CD4-positive, alpha-beta T cell (primary cell): ENCODE measurements at regions of chr6 and their contacts with region 1.

Region 1: DNA sequence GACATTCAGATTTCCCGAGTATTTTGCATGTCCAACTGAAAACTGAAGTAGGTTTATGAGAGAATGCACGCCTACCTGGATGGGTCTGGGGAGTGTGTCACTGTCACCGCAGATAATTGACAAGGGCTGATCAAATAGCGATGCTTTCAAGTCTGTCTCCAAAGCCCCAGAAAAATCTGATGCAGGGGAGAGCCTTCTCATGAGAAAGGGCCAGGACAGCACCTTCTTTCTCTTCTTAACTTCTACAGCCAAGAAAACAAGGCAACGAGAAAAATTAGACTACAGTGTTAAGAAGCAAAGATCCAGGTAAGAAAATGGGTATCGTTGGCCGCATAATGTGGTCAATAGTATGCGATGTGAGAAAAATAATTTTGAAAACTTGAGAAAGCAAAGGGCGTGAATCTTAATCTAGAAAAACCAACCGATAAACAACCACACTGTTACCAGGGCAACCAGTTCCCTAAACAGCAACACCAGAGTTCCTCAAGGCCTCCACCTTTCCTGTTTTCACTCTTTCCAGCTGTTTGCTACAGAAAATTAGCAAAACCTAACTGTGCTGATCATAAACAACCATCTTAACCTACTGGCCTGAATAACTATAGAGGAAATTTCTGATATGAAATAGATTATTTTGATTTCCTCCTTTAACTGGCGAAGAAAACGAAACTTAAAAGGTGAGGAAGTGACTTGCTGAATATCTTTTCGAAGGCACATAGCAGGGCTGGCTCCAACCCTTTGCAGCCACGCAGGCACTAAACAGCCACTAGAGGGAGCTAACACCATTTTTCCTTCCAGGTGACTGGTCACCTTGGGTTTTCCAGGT is 2.6 kb downstream of the TAGAP start:
- DNase-seq: peak; percentile 57 to 94 (median 68)
- ATAC-seq: peak; percentile 54
- H3K4me3 ChIP-seq: peak overlapping the region; percentile 88
- H3K4me3 Mint-ChIP-seq: peak overlapping the region; percentile 97
- H3K27ac ChIP-seq: peak overlapping the region; percentile 81 to 91
- H3K27ac Mint-ChIP-seq: peak overlapping the region; percentile 91
- H3K4me1 ChIP-seq: peaks cover 61% of the 10 kb centered on the region
- H3K4me1 Mint-ChIP-seq: peaks cover 76% of the 10 kb centered on the region
- H3K27me3 ChIP-seq: no peaks in the 10 kb centered on the region
- H3K27me3 Mint-ChIP-seq: no peaks in the 10 kb centered on the region
- CTCF ChIP-seq: peak; percentile 99

Region 2: GRCh38 chr6:159008656-159009288 is 33.4 kb before region 1 on chr6:
- CTCF ChIA-PET with region 1: interaction called, 14 read pairs
- POLR2A ChIA-PET with region 1: interaction called, 35 read pairs
- intact Hi-C with region 1: loop called (anchors 2 to 5 kb)
- DNase-seq: peak in 4 of 14 experiments; percentile 22 to 79 (median 77)
- ATAC-seq: peak; percentile 83
- H3K4me3 ChIP-seq: peak overlapping the region; percentile 23
- H3K4me3 Mint-ChIP-seq: peak overlapping the region; percentile 39
- H3K27ac ChIP-seq: no peak overlapping the region
- H3K27ac Mint-ChIP-seq: no peak overlapping the region
- H3K4me1 ChIP-seq: peaks cover 29% of the 10 kb centered on the region
- H3K4me1 Mint-ChIP-seq: peaks cover 47% of the 10 kb centered on the region
- H3K27me3 ChIP-seq: no peaks in the 10 kb centered on the region
- H3K27me3 Mint-ChIP-seq: no peaks in the 10 kb centered on the region
- CTCF ChIP-seq: peak; percentile 85

Region 3: DNA sequence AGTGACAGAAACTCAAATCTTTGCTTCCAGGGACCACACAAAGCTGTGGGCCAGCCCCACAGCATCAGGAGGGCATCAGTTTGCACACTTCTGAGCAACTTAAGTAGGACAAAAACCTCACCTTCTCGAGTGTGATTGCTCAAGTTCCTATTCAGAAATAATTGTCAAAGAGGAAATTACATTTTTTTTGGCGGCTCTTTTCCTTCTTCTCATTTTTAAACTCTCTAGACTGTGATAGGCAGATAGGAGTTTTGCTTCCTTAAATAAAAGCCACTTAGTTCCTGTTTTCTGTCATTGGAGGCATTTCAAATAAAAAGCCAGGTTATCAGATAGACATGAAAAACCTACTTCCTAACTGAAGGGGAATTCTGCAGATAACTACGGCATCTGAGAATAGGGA is 13.8 kb after region 1 on chr6:
- CTCF ChIA-PET with region 1: interaction called, 7 read pairs
- POLR2A ChIA-PET with region 1: interaction called, 146 read pairs
- intact Hi-C with region 1: loop called in 1 of 2 experiments (anchors 2 kb)
- DNase-seq: peak in 2 of 14 experiments; percentile 39 to 58
- ATAC-seq: no peak
- H3K4me3 ChIP-seq: no peak overlapping the region
- H3K4me3 Mint-ChIP-seq: peak overlapping the region; percentile 11
- H3K27ac ChIP-seq: no peak overlapping the region
- H3K27ac Mint-ChIP-seq: peak overlapping the region; percentile 68
- H3K4me1 ChIP-seq: peaks cover 45% of the 10 kb centered on the region
- H3K4me1 Mint-ChIP-seq: peaks cover 63% of the 10 kb centered on the region
- H3K27me3 ChIP-seq: no peaks in the 10 kb centered on the region
- H3K27me3 Mint-ChIP-seq: no peaks in the 10 kb centered on the region
- CTCF ChIP-seq: no peak

Region 4: GRCh38 chr6:159098636-159099106 is 56.5 kb after region 1 on chr6:
- CTCF ChIA-PET with region 1: interaction called, 72 read pairs
- POLR2A ChIA-PET with region 1: interaction called, 99 read pairs
- intact Hi-C with region 1: loop called (anchors 1 to 2 kb)
- DNase-seq: peak; percentile 41 to 95 (median 61)
- ATAC-seq: peak; percentile 83
- H3K4me3 ChIP-seq: peak overlapping the region; percentile 28
- H3K4me3 Mint-ChIP-seq: peak overlapping the region; percentile 43
- H3K27ac ChIP-seq: peak overlapping the region; percentile 70 to 87
- H3K27ac Mint-ChIP-seq: peak overlapping the region; percentile 86
- H3K4me1 ChIP-seq: peaks cover 69% of the 10 kb centered on the region
- H3K4me1 Mint-ChIP-seq: peaks cover 76% of the 10 kb centered on the region
- H3K27me3 ChIP-seq: no peaks in the 10 kb centered on the region
- H3K27me3 Mint-ChIP-seq: no peaks in the 10 kb centered on the region
- CTCF ChIP-seq: no peak

Region 5: GRCh38 chr6:159110013-159110412 is 67.8 kb after region 1 on chr6:
- CTCF ChIA-PET with region 1: interaction called, 72 read pairs
- POLR2A ChIA-PET with region 1: interaction called, 120 read pairs
- intact Hi-C with region 1: no loop called
- DNase-seq: peak in 4 of 14 experiments; percentile 58 to 78 (median 70)
- ATAC-seq: no peak
- H3K4me3 ChIP-seq: no peak overlapping the region
- H3K4me3 Mint-ChIP-seq: peak overlapping the region; percentile 16
- H3K27ac ChIP-seq: peak overlapping the region in 1 of 2 donors; percentile 80
- H3K27ac Mint-ChIP-seq: peak overlapping the region; percentile 88
- H3K4me1 ChIP-seq: peaks cover 85% of the 10 kb centered on the region
- H3K4me1 Mint-ChIP-seq: peaks cover 58% of the 10 kb centered on the region
- H3K27me3 ChIP-seq: no peaks in the 10 kb centered on the region
- H3K27me3 Mint-ChIP-seq: no peaks in the 10 kb centered on the region
- CTCF ChIP-seq: peak; percentile 75

Region 6: DNA sequence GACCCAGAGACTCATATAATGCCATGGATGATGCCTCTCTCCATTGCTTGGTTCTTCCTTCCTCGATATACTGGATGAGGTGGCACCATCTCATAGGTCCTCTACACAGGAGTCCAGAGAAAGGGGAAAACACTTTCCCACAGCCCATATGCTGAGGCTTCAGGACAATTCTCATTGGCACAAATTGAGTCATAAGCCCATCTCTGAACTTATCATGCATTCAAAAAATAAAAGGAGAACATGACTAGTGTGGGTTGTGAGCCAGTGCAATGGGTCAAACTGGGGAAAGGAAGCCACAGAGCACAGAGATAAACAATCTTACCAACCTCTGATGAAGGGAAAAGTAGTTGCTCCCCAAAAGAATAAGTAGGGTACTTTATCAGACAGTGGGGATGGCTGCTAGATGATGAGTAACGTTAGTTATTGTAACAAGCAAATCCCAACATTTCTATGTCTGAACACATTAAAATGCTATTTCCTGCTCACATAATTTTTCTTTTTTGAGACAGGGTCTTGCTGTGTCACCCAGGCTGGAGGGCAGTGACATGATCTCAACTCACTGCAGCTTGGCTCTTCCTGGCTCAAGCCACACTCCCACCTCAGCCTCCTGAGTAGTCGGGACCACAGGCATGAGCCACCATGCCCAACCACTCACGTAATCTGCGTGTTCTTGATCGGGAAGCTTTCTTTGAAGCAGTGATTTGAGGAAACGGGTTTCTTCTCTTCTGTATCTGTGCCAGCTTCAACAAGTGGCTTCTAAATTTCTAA is 623.8 kb after region 1 on chr6:
- CTCF ChIA-PET with region 1: no interaction called
- POLR2A ChIA-PET with region 1: no interaction called
- intact Hi-C with region 1: no loop called
- DNase-seq: no peak
- ATAC-seq: no peak
- H3K4me3 ChIP-seq: no peak overlapping the region
- H3K4me3 Mint-ChIP-seq: no peak overlapping the region
- H3K27ac ChIP-seq: no peak overlapping the region
- H3K27ac Mint-ChIP-seq: no peak overlapping the region
- H3K4me1 ChIP-seq: no peaks in the 10 kb centered on the region
- H3K4me1 Mint-ChIP-seq: no peaks in the 10 kb centered on the region
- H3K27me3 ChIP-seq: no peaks in the 10 kb centered on the region
- H3K27me3 Mint-ChIP-seq: no peaks in the 10 kb centered on the region
- CTCF ChIP-seq: no peak